Sigmoid colon (tissue), 7 donors: ENCODE measurements at regions of chr6 and their contacts with region 1.

Region 1: DNA sequence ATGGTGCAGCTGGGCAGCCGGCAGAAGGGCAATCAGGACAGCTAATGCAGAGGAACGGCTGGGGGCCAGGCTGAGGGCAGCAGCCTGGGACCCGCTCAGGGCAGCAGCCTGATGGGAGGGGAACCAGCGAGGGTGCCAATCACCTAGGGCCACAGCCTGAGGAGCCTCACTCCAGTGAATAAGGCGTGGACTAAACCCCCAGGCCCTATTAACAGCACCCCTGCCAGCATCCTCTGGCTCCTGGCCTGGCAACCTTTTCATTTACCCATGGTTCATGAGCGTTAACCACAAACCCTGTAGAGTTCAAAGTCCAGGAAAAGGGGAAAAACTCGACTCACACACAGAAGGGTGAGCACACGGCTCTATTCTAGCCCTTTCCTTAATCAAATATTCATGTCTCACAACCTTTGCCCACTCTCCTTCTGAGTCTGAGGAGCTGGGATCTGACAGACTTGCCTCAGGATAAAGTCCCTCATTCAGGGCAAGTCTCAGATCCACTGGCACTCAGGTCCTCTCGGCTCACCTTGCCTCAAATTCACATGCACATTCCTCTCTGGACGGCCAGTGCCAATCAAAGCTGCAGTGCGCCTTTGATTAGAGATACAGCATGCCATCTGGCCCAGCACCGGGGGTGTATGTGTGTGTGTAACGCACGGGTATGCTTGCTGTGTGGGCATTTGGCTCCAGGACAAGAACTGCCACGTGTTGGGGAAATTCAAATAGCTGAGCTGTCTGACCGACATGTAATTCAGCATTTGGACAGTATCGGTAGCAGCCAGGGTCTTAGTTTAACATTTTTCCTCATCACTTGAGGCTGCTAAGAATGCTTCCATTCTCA is 86.9 kb upstream of the TRAF3IP2 start:
- DNase-seq: peak; percentile 69
- H3K4me3 ChIP-seq: no peak overlapping the region
- H3K27ac ChIP-seq: peak overlapping the region in 3 of 4 donors; percentile 74 to 82 (median 78)
- H3K4me1 ChIP-seq: peaks cover 0 to 49% (median 41%) of the 10 kb centered on the region in 4 donors
- H3K27me3 ChIP-seq: no peaks in the 10 kb centered on the region
- CTCF ChIP-seq: no peak
- EP300 ChIP-seq: no peak
- POLR2A ChIP-seq: no peak

Region 2: DNA sequence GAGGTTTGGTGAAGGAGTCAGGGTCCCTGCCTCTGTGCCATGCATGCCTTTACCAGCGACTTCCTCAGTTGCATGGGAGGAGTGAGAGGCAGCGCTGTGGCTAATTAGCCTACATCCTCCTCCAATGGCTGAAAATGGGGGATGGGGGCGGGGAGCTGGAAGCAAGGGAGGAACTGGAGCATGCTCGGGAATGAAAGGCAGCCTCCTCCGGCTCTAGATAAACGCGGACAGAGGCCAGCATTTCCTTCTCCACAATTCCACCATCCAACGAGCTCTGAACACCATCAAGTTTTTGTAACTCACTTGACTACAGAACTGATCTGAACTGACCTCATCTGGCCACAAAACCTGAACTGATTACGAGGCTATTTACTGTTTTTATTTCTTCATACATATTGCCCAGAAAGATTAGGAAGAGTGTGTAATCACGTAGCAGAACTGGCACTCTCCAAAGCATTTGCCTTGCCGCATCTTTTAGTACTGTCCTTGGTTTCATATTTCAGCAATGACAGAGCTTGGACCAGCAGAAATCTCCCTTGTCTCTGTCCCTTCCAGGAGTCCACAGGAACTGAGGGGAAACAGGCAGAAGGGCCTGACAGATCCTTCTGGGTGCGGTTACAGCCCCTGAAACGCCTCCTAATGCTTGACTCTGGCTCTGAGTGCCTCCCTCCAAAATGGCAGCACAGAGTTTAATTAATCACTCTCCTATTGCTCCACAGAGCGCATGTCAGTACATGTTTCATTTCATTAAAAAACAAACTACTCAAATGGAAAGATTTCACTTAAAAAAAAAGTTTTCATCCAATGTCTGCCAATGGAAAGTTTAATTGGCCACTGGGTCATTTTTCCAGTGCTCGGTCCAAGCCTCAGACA is 28.6 kb before region 1 on chr6:
- intact Hi-C with region 1: loop called (anchors 2 kb)
- DNase-seq: peak; percentile 85
- H3K4me3 ChIP-seq: no peak overlapping the region
- H3K27ac ChIP-seq: peak overlapping the region; percentile 66 to 85 (median 79)
- H3K4me1 ChIP-seq: peaks cover 0 to 97% (median 81%) of the 10 kb centered on the region in 4 donors
- H3K27me3 ChIP-seq: no peaks in the 10 kb centered on the region
- CTCF ChIP-seq: no peak
- EP300 ChIP-seq: peak in 1 of 4 donors; percentile 6
- POLR2A ChIP-seq: no peak

Region 3: DNA sequence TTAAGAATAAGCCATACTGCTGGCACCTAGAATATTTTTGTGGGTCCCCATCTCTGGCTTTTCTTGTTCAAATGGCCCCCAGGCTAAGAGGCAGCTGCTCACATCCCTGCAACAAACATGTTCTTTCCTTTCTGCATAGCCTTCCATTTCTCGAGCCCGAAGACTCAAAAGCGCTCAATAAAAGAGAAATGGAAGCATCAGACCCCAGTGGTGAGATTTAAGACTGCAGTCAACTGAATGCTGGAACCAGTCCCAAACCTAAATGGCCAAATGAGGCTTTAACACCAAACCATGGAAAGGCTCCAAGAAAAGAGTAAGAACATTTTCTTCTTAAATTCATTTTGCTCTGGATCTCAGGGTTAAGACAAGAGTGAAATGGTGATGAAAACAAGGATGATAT is 35.3 kb after region 1 on chr6:
- intact Hi-C with region 1: no loop called
- DNase-seq: no peak
- H3K4me3 ChIP-seq: no peak overlapping the region
- H3K27ac ChIP-seq: no peak overlapping the region
- H3K4me1 ChIP-seq: peaks cover 0 to 24% (median 3%) of the 10 kb centered on the region in 4 donors
- H3K27me3 ChIP-seq: no peaks in the 10 kb centered on the region
- CTCF ChIP-seq: peak in 1 of 4 experiments; percentile 31
- EP300 ChIP-seq: no peak
- POLR2A ChIP-seq: no peak

Region 4: GRCh38 chr6:112117554-112117953 is 425.0 kb after region 1 on chr6:
- intact Hi-C with region 1: no loop called
- DNase-seq: no peak
- H3K4me3 ChIP-seq: no peak overlapping the region
- H3K27ac ChIP-seq: peak overlapping the region in 3 of 4 donors; percentile 17 to 44 (median 23)
- H3K4me1 ChIP-seq: peaks cover 0 to 8% (median 6%) of the 10 kb centered on the region in 4 donors
- H3K27me3 ChIP-seq: no peaks in the 10 kb centered on the region
- CTCF ChIP-seq: no peak
- EP300 ChIP-seq: no peak
- POLR2A ChIP-seq: no peak

Region 5: GRCh38 chr6:113018351-113019151 is 1326.0 kb after region 1 on chr6:
- intact Hi-C with region 1: no loop called
- DNase-seq: peak; percentile 55
- H3K4me3 ChIP-seq: no peak overlapping the region
- H3K27ac ChIP-seq: peak overlapping the region; percentile 44 to 68 (median 51)
- H3K4me1 ChIP-seq: peaks cover 0 to 18% (median 12%) of the 10 kb centered on the region in 4 donors
- H3K27me3 ChIP-seq: no peaks in the 10 kb centered on the region
- CTCF ChIP-seq: no peak
- EP300 ChIP-seq: no peak
- POLR2A ChIP-seq: no peak